IMR-90 (cell line): ENCODE measurements at regions of chr2 and their contacts with region 1.

Region 1: DNA sequence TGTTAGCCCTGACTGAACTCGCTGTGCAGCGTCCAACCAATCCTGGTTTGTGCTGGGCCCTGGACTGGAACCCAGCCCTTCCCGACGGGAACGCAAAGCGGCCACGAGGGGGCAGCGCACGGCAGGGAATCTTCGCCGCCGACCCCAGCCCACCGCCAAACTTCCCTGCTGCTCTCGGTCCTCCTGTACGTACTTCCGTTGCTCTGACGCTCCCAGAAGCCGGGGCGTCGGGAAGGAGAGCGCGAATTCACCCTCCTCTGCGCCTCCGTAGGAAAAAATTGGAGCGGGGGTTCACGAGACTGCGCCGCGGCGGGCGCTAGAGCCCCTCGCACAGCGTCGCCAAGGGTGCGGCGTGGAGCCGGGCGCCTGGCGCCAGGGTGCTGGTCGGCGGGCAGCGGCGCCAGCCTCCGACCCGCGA is 948 bp upstream of the SH3RF3 start:
- DNase-seq: peak; percentile 91
- ATAC-seq: peak; percentile 68
- H3K4me3 ChIP-seq: peak overlapping the region; percentile 58
- H3K27ac ChIP-seq: peak overlapping the region; percentile 83
- H3K4me1 ChIP-seq: peaks cover 13% of the 10 kb centered on the region
- H3K27me3 ChIP-seq: peaks cover 2% of the 10 kb centered on the region; the same call in 1 of the 2 replicates
- CTCF ChIP-seq: peak; percentile 98
- POLR2A ChIP-seq: peak; percentile 61
- RAD21 ChIP-seq: peak; percentile 98

Region 2: DNA sequence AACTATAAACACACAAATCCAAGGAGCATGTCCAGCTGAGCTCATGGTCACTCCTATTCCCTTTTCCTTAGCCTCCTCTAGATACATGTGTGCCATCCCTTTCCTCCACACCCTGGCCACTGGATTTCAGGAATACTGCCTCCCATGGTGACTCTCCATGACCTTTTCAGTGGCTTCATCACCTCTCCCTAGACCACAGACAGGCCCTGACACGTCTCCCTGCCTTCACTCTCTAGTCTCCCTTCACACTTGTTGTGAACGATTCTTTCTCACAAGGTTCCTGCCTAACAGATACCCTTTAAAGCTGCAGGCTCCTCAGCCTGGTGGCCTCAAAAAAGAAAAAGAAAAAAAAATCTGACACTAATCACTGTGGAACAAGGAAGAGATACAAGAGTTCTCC is 278.7 kb before region 1 on chr2:
- CTCF ChIA-PET with region 1: no interaction called
- POLR2A ChIA-PET with region 1: no interaction called
- dilution Hi-C with region 1: no loop called
- in situ Hi-C with region 1: no loop called
- intact Hi-C with region 1: no loop called
- DNase-seq: no peak
- ATAC-seq: no peak
- H3K4me3 ChIP-seq: no peak overlapping the region
- H3K27ac ChIP-seq: no peak overlapping the region
- H3K4me1 ChIP-seq: no peaks in the 10 kb centered on the region
- H3K27me3 ChIP-seq: no peaks in the 10 kb centered on the region
- CTCF ChIP-seq: no peak
- POLR2A ChIP-seq: no peak
- RAD21 ChIP-seq: no peak

Region 3: DNA sequence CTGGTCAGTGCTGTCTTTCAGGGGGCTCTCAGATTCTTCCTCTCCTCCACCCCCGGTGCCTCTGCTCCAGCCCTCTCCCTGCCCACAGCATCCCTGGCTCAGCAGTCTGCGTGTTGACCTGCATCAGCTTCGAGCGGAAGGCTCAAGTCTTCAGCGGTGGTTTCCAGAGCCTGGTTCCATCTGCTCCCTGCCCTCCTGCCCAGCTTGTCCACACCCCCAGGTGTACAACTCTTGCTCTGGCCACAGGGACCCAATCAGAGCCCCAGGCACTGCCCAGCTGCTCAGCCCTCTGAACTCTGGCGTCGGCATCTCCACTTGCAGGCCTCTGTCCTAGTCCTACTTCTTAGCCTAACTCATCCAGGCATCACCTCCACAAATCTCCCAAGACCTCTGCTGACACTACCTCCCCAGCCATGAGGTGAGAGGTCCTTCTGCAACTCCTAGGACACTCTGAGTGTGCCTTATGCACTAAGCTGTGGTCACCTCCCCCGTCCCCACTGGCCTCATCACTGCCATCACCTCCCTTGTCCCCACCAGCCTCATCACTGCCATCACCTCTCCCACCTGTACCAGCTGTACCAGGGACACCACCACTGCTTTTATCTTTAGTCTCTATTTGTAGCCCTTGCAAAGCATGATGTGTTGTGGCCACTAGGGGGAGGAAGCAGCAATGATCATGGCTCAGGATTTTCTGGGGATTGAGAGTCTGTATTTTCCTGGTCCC is 200.0 kb before region 1 on chr2:
- CTCF ChIA-PET with region 1: no interaction called
- POLR2A ChIA-PET with region 1: no interaction called
- dilution Hi-C with region 1: no loop called
- in situ Hi-C with region 1: no loop called
- intact Hi-C with region 1: loop called (anchors 2 kb)
- DNase-seq: peak; percentile 64
- ATAC-seq: peak; percentile 95
- H3K4me3 ChIP-seq: no peak overlapping the region
- H3K27ac ChIP-seq: no peak overlapping the region
- H3K4me1 ChIP-seq: no peaks in the 10 kb centered on the region
- H3K27me3 ChIP-seq: peaks cover 82% of the 10 kb centered on the region
- CTCF ChIP-seq: peak; percentile 80
- POLR2A ChIP-seq: no peak
- RAD21 ChIP-seq: peak; percentile 75

Region 4: DNA sequence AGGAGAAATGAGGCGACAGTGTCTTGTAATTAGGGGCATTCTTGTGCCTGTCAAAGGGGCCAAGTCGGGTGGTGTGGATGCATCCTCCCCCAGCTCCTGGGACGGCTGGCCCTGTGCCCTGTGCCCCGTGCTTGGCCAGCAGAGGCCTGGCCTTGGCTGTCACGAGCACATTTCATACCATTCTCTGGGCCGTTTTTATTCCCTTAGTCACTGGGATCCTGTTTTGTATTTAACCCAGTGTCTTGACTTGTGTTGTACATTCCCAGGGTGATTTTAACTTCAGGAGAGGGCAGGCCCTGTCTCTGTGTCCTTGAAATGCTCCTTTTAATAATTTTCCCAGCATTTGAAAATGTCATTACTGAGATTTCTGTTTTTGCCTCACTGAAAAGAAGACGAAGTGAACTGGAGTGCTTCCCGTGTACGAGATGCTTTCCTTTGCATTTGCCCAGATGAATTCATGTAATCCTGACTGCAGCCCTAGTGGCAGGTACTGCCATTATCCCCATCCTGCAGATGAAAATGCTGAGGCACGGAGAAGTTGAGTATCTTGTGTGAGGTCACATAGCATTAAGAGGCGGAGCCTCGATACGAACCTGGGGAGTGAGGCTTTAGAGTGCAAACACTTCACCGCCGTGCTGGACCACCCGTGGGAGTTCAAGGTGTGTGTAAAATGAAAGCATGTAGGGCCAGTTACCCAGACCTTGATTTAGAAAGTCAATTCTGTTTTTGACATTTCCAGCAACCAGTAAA is 57.9 kb after region 1 on chr2:
- CTCF ChIA-PET with region 1: no interaction called
- POLR2A ChIA-PET with region 1: no interaction called
- dilution Hi-C with region 1: no loop called
- in situ Hi-C with region 1: no loop called
- intact Hi-C with region 1: loop called (anchors 2 kb)
- DNase-seq: peak; percentile 85
- ATAC-seq: peak; percentile 75
- H3K4me3 ChIP-seq: no peak overlapping the region
- H3K27ac ChIP-seq: peak overlapping the region; percentile 89
- H3K4me1 ChIP-seq: peaks cover 27% of the 10 kb centered on the region
- H3K27me3 ChIP-seq: no peaks in the 10 kb centered on the region
- CTCF ChIP-seq: 0 out of 2 replicates have a peak, but pooled peaks have one; percentile 2
- POLR2A ChIP-seq: no peak; the same call in 1 of the 2 replicates
- RAD21 ChIP-seq: no peak

Region 5: GRCh38 chr2:109238580-109238979 is 110.5 kb after region 1 on chr2:
- CTCF ChIA-PET with region 1: no interaction called
- POLR2A ChIA-PET with region 1: interaction called, 4 read pairs
- dilution Hi-C with region 1: no loop called
- in situ Hi-C with region 1: no loop called
- intact Hi-C with region 1: loop called (anchors 1 kb)
- DNase-seq: peak; percentile 95
- ATAC-seq: peak; percentile 68
- H3K4me3 ChIP-seq: no peak overlapping the region
- H3K27ac ChIP-seq: peak overlapping the region; percentile 96
- H3K4me1 ChIP-seq: peaks cover 45% of the 10 kb centered on the region
- H3K27me3 ChIP-seq: no peaks in the 10 kb centered on the region
- CTCF ChIP-seq: no peak
- POLR2A ChIP-seq: no peak
- RAD21 ChIP-seq: peak; percentile 10; the same call in 1 of the 2 replicates

Region 6: GRCh38 chr2:109318150-109318948 is 190.3 kb after region 1 on chr2:
- CTCF ChIA-PET with region 1: no interaction called
- POLR2A ChIA-PET with region 1: no interaction called
- dilution Hi-C with region 1: no loop called
- in situ Hi-C with region 1: no loop called
- intact Hi-C with region 1: loop called (anchors 2 kb)
- DNase-seq: peak; percentile 98
- ATAC-seq: peak; percentile 60
- H3K4me3 ChIP-seq: peak overlapping the region; percentile 2
- H3K27ac ChIP-seq: peak overlapping the region; percentile 73
- H3K4me1 ChIP-seq: peaks cover 41% of the 10 kb centered on the region
- H3K27me3 ChIP-seq: no peaks in the 10 kb centered on the region
- CTCF ChIP-seq: peak; percentile 42
- POLR2A ChIP-seq: peak; percentile 53; the same call in 1 of the 2 replicates
- RAD21 ChIP-seq: peak; percentile 31

Region 7: GRCh38 chr2:109356324-109357035 is 228.4 kb after region 1 on chr2:
- CTCF ChIA-PET with region 1: no interaction called
- POLR2A ChIA-PET with region 1: no interaction called
- dilution Hi-C with region 1: no loop called
- in situ Hi-C with region 1: no loop called
- intact Hi-C with region 1: no loop called
- DNase-seq: no peak
- ATAC-seq: no peak
- H3K4me3 ChIP-seq: no peak overlapping the region
- H3K27ac ChIP-seq: no peak overlapping the region
- H3K4me1 ChIP-seq: peaks cover 4% of the 10 kb centered on the region
- H3K27me3 ChIP-seq: no peaks in the 10 kb centered on the region
- CTCF ChIP-seq: no peak
- POLR2A ChIP-seq: no peak
- RAD21 ChIP-seq: no peak

Region 8: GRCh38 chr2:109376115-109376514 is 248.1 kb after region 1 on chr2:
- CTCF ChIA-PET with region 1: no interaction called
- POLR2A ChIA-PET with region 1: no interaction called
- dilution Hi-C with region 1: no loop called
- in situ Hi-C with region 1: no loop called
- intact Hi-C with region 1: loop called (anchors 5 kb)
- DNase-seq: peak; percentile 67
- ATAC-seq: peak; percentile 47; the same call in 1 of the 2 replicates
- H3K4me3 ChIP-seq: no peak overlapping the region
- H3K27ac ChIP-seq: no peak overlapping the region
- H3K4me1 ChIP-seq: peaks cover 8% of the 10 kb centered on the region
- H3K27me3 ChIP-seq: no peaks in the 10 kb centered on the region
- CTCF ChIP-seq: no peak
- POLR2A ChIP-seq: no peak
- RAD21 ChIP-seq: no peak